Esophagus squamous epithelium (tissue), 5 donors: ENCODE measurements at regions of chr1 and their contacts with region 1.

Region 1: DNA sequence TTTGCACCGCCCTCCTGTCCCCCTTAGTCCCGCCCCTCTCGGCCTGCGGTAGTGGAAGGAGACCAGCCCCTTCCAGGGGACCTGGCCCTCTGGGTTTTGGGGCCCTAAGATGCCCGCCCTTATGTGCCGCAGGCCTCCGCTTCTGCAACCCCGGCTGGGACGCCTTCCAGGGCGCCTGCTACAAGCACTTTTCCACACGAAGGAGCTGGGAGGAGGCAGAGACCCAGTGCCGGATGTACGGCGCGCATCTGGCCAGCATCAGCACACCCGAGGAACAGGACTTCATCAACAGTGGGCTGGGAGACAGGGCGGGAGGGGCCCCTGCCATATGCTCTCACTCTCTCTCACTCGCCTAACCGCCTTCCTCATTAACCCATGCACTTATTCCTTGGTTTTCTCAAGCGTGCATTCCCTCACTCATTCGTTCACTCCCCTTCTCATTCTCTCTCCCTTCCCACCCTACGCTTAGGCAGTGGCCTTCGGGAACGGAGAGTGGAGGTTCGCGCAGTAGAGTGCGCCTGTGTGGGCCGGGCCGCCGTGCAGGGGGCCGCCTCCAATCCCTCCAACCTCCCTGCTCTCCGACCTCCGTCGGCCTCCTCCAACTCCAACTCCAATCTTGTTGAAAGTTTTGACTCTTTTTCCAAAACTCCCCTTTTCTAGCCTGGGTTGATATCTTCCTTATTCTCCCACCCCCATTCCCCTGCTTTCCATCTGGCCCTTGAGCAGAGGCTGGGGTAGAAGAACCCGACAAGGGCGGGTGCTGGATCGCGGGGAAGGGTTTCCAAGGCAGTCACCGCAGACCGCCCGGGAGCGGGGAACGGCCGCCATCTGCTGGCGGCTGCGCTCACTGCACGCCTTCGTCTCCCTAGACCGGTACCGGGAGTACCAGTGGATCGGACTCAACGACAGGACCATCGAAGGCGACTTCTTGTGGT is 15.2 kb downstream of the BCAN start:
- DNase-seq: no peak
- H3K4me3 ChIP-seq: peak overlapping the region; percentile 5 to 59 (median 24)
- H3K27ac ChIP-seq: no peak overlapping the region
- H3K4me1 ChIP-seq: peaks cover 41 to 53% (median 42%) of the 10 kb centered on the region in 3 donors
- H3K27me3 ChIP-seq: peaks cover 0 to 60% (median 0%) of the 10 kb centered on the region in 4 donors
- CTCF ChIP-seq: peak; percentile 86 to 95 (median 92)
- POLR2A ChIP-seq: no peak

Region 2: DNA sequence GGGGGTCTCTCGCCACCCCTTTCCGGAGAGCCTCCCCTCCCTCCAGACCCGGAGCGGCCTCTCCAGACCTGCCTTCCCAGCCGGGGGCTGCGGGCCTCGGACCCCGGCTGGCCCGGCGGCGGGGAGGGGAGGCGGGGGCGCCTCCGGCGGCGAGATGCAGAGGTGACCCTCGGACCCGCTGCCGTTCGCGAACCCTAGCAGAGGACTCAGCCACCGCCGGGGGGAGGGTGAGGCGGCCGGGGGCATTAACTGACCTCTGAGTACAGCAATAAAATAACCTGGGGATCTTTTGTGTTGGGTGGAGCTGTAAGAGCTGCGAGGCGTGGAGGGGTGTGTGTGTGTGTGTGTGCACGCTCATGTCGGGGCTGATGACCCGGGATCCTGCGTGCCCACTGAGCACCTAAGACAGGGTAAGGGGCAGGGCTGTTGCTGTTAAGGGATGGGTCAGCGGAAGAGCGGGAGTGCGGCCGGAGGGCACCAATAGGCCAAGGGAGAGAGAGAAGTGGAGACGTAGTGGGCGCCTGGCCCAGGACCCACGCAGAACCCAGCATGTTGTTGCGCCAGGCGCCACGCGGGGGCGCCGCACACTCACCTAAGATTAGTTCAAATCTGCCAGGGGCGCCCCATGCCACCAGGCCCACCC is 31.5 kb before region 1 on chr1:
- intact Hi-C with region 1: loop called (anchors 2 kb)
- DNase-seq: no peak
- H3K4me3 ChIP-seq: peak overlapping the region in 3 of 4 donors; percentile 34 to 65 (median 42)
- H3K27ac ChIP-seq: no peak overlapping the region
- H3K4me1 ChIP-seq: peaks cover 21 to 26% (median 24%) of the 10 kb centered on the region in 3 donors
- H3K27me3 ChIP-seq: peaks cover 13 to 100% (median 27%) of the 10 kb centered on the region in 4 donors
- CTCF ChIP-seq: peak; percentile 60 to 82 (median 78)
- POLR2A ChIP-seq: no peak